Gastrocnemius medialis (tissue), 4 donors: ENCODE measurements at regions of chr21 and their contacts with region 1.

Region 1: DNA sequence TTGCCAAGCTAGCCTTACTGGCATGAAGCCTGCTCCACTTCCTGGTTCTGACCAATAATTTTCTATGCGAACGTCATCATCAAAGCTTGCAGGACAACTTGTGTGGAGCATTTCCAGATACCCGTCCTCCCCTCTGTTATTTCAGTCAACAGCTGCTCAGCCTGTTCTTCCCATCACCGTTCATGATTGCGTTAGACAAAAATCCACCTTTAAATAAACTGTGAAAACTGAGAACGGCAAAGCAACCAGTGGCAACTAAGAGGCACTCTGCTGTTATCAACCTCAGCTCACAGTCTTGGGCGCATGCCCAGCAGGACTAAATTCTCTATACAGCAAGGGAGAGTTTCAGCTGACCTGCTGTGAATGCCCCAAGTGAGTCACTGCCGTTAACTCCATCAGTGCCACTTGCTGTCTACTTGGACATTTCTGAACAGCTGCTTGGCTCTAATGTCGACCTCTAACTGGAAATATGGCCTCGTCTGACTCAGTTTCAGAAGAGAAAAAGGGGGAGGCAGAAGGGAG is 207.4 kb upstream of the RUNX1 start:
- DNase-seq: peak; percentile 96 to 99
- ATAC-seq: peak; percentile 82 to 88
- H3K4me3 ChIP-seq: no peak overlapping the region
- H3K27ac ChIP-seq: peak overlapping the region; percentile 84 to 91 (median 87)
- H3K4me1 ChIP-seq: peaks cover 49 to 61% of the 10 kb centered on the region in 2 donors
- H3K27me3 ChIP-seq: no peaks in the 10 kb centered on the region
- CTCF ChIP-seq: no peak
- POLR2A ChIP-seq: no peak

Region 2: GRCh38 chr21:34795175-34795547 is 461.4 kb before region 1 on chr21:
- in situ Hi-C with region 1: no loop called
- intact Hi-C with region 1: loop called (anchors 2 kb)
- DNase-seq: peak in 1 of 2 donors; percentile 49
- ATAC-seq: peak; percentile 77 to 80
- H3K4me3 ChIP-seq: peak overlapping the region in 1 of 4 donors; percentile 9
- H3K27ac ChIP-seq: peak overlapping the region; percentile 78 to 88 (median 84)
- H3K4me1 ChIP-seq: peaks cover 31 to 42% of the 10 kb centered on the region in 2 donors
- H3K27me3 ChIP-seq: no peaks in the 10 kb centered on the region
- CTCF ChIP-seq: peak in 4 of 5 experiments; percentile 18 to 30 (median 24)
- POLR2A ChIP-seq: no peak

Region 3: DNA sequence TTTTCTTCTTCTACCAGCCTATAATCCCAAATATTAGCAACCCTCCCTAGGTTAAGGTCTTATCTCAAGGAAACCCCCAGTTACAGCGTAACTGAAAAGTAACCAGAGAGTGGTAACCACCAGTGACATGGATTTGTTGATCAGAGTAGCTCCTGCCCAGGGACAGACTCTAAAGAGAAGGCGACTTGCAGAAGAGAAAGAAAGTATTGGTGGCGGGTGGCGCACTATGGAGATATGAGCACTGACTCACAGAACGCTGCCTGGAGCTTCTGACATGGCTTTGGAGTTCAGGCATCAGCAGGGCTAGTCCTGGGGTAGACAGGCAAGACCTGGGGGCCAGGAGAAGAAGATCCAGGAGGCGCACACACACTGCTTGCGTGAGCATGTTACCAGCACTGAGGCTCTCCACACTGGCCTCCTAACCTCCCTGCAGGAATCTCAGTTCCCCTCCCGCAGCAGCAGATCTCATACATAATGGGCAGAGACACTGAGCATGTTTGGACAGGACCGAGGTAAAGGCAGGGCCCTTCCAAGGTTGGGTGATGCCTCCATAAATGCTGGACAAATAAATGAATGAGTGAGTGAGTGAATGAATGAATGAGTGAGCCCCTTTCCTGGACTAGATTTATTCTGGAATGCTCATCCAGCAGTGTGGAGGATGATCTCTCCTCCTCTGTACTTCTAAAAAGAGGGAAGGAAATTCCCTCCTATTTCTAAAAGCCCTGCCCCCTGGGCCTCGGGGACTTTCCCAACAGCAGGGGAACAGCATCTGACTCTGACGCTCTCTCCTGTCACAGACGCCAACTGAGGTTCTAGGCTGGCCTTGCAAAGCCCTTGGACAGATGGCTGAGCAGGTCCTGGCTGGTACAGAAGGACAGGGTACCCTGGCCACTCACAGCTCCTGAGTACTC is 412.3 kb before region 1 on chr21:
- in situ Hi-C with region 1: no loop called
- intact Hi-C with region 1: loop called (anchors 1 kb)
- DNase-seq: peak; percentile 86 to 93
- ATAC-seq: peak; percentile 65
- H3K4me3 ChIP-seq: peak overlapping the region in 2 of 4 donors; percentile 43 to 49
- H3K27ac ChIP-seq: peak overlapping the region; percentile 85 to 97 (median 92)
- H3K4me1 ChIP-seq: peaks cover 57 to 59% of the 10 kb centered on the region in 2 donors
- H3K27me3 ChIP-seq: no peaks in the 10 kb centered on the region
- CTCF ChIP-seq: no peak
- POLR2A ChIP-seq: peak; percentile 46 to 76

Region 4: DNA sequence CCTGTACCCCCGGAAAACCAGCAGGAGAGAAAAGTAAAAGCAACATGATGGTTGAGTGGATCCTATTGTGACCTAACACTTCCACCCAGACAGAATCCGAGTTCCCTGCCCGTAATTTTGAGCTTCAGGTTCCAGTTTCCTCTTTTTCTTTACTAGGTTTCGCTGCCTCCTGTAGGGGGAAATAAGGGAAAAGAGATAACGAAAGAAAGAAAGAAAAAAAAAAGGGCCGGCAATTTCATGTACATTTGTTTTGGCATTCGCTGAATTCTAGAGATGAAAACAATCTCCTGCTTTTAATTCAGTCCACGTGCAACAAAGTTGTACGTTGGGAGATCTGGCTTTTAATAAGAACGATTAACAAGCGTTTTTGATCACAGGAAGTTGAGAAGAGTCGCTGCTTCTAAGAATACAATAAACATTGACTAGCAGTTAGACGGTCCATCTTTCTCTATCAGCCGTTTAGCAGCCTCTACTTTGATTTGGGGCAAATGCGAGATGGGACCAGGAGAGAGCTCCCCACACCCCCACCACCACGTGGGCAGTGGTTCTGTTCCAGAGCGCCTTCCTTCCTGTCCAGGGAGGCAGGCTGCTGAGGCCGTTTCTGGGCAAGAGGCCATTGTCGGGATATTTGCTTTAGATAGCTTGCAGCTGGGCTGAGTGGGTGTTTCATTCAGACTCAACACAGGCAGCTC is 51.5 kb before region 1 on chr21:
- in situ Hi-C with region 1: no loop called
- intact Hi-C with region 1: loop called (anchors 1 kb)
- DNase-seq: peak in 1 of 2 donors; percentile 49
- ATAC-seq: no peak
- H3K4me3 ChIP-seq: peak overlapping the region in 2 of 4 donors; percentile 8 to 17
- H3K27ac ChIP-seq: peak overlapping the region; percentile 75 to 90 (median 82)
- H3K4me1 ChIP-seq: peaks cover 58 to 82% of the 10 kb centered on the region in 2 donors
- H3K27me3 ChIP-seq: no peaks in the 10 kb centered on the region
- CTCF ChIP-seq: no peak
- POLR2A ChIP-seq: no peak

Region 5: DNA sequence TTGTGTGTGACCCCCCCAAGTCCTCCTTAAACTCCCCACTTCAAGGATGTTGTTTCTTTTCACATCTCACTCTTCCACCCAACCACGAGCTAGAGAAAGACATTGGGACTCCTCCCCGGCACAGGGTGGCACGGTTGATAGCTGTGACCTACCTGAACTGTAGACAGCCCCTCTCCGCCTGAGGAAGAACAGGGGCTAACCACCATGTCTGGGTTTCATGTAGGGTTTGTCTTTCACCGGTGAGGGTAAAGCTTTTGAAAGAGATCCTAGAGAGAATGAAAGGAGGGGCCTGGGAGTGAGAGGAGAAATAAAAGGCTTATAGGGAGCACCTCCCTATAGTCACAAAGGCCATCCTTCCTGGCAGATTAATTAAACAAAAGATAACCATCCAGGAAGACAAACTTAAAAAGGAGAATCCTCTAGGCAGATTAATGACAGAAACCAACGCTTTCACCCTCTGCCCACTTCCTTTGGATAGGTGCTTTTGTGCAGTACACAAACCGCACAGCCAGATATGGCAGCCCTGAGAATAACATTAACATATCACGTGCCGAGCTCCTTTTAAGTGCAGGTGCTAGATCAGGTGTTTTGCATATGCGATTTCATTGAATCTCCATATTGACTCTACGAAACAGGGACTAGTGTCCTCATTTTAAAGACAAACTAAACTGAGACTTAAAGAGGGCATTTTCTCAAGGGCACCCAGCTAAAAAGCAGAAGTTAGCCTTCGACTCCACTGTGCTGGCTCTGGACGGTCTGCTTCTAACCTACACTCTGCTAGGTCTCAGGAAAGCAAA is 29.4 kb before region 1 on chr21:
- in situ Hi-C with region 1: no loop called
- intact Hi-C with region 1: loop called (anchors 1 kb)
- DNase-seq: no peak
- ATAC-seq: peak; percentile 24 to 27
- H3K4me3 ChIP-seq: no peak overlapping the region
- H3K27ac ChIP-seq: peak overlapping the region; percentile 85 to 93 (median 90)
- H3K4me1 ChIP-seq: peaks cover 53 to 68% of the 10 kb centered on the region in 2 donors
- H3K27me3 ChIP-seq: no peaks in the 10 kb centered on the region
- CTCF ChIP-seq: no peak
- POLR2A ChIP-seq: no peak

Region 6: GRCh38 chr21:35366394-35367080 is 110.0 kb after region 1 on chr21:
- in situ Hi-C with region 1: no loop called
- intact Hi-C with region 1: loop called (anchors 5 kb)
- DNase-seq: peak; percentile 34 to 60
- ATAC-seq: peak; percentile 91 to 94
- H3K4me3 ChIP-seq: no peak overlapping the region
- H3K27ac ChIP-seq: peak overlapping the region; percentile 66 to 82 (median 69)
- H3K4me1 ChIP-seq: peaks cover 17 to 20% of the 10 kb centered on the region in 2 donors
- H3K27me3 ChIP-seq: no peaks in the 10 kb centered on the region
- CTCF ChIP-seq: no peak
- POLR2A ChIP-seq: no peak

Region 7: DNA sequence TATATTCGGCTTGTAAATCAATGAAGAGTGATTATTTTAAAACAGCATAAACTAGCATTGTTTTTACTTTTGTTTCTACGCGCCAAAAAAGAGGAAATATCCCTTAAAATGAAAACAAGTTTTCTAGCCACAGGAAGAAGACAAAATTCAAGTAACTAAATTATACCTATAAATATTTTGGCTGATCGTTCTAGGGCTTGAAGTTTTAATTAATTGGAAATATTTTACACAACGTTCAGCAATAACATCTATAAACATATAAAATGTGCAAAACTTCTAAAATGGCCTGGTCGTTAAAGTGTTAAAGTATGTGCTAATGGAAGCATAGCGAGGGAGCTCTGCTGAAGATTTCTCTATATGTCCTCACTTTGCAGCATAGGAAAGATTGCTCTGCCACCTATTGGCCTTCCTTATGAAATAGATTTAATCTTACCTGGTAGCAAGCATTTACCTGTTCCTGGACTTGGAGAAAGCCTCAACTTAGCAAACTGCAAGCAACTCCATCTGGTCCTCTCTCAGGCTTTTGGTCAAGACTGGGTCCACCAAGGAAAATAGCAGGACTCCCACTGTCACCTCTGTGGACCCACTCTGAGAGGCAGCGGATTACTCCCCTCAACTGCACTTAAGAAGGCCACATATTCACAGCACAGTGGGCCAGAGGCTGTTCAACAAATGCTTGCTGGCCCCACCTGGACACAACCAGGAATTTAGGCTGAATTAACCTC is 143.9 kb after region 1 on chr21:
- in situ Hi-C with region 1: no loop called
- intact Hi-C with region 1: loop called (anchors 2 kb)
- DNase-seq: peak in 1 of 2 donors; percentile 8
- ATAC-seq: peak; percentile 93 to 98
- H3K4me3 ChIP-seq: no peak overlapping the region
- H3K27ac ChIP-seq: no peak overlapping the region
- H3K4me1 ChIP-seq: peaks cover 0 to 14% of the 10 kb centered on the region in 2 donors
- H3K27me3 ChIP-seq: no peaks in the 10 kb centered on the region
- CTCF ChIP-seq: peak; percentile 54 to 71 (median 59)
- POLR2A ChIP-seq: no peak